Transverse colon (tissue), 4 donors: ENCODE measurements at regions of chr17 and their contacts with region 1.

Region 1: DNA sequence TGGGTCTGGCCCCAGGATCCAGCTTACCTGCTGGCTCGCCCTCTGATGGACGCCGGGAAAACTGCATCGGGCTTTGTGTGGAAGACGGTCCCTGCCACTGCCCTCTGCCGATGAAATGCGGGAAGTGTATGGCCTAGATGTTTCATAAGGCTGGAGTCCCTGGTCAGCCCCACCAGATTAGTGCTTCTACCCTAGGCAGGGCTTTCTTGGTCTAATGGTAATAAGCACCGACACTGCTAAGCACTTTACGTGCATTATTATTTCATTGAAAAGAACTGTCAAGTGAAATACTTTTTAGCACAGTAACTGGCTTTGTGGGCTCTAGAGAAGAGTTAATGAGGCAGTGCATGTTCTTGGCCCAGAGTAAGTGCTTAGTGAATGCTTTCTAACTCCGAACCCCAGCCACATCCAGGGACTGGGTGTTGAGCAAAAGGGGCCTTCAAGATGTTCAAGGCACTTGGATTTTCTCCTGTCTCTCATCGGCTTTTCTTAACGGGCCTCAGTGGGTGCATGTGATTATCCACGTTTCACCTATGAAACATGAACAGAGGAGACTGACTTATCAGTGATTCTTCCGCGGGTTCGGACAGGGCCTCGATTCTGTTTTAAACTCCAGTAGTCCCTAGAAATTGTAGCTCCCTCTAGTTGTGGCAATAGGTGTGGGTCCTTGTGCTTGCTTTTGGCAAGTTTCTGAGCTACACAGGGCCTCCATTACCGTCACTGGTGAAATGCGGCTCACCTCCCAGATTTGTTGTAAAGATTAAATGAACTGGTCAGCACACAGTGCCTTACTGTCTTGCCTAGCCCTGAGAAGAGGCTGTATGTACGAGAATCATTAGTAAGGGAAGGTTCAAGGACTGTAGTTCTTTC is 6.6 kb downstream of the TRAF4 start:
- DNase-seq: peak; percentile 97
- H3K4me3 ChIP-seq: no peak overlapping the region
- H3K27ac ChIP-seq: peak overlapping the region; percentile 63 to 99 (median 98)
- H3K4me1 ChIP-seq: peaks cover 17 to 51% (median 47%) of the 10 kb centered on the region in 4 donors
- H3K27me3 ChIP-seq: no peaks in the 10 kb centered on the region
- CTCF ChIP-seq: peak; percentile 99 to 100 (median 100)
- EP300 ChIP-seq: no peak
- POLR2A ChIP-seq: peak; percentile 8

Region 2: GRCh38 chr17:28726226-28727130 is 23.9 kb before region 1 on chr17 and contains the start of gene TLCD1:
- in situ Hi-C with region 1: no loop called
- intact Hi-C with region 1: loop called (anchors 2 kb)
- DNase-seq: peak; percentile 96
- H3K4me3 ChIP-seq: peak within 1 kb of the TSS; percentile 60 to 77 (median 64)
- H3K27ac ChIP-seq: peak within 1 kb of the TSS; percentile 97 to 98 (median 97)
- H3K4me1 ChIP-seq: peaks cover 25 to 69% (median 54%) of the 10 kb centered on the region in 4 donors
- H3K27me3 ChIP-seq: no peaks in the 10 kb centered on the region
- CTCF ChIP-seq: peak; percentile 99 to 100 (median 100)
- EP300 ChIP-seq: no peak
- POLR2A ChIP-seq: no peak
- total RNA-seq, gene TLCD1: 5.6 to 11.5 TPM in 2 of 4 donors, not detected in the others

Region 3: DNA sequence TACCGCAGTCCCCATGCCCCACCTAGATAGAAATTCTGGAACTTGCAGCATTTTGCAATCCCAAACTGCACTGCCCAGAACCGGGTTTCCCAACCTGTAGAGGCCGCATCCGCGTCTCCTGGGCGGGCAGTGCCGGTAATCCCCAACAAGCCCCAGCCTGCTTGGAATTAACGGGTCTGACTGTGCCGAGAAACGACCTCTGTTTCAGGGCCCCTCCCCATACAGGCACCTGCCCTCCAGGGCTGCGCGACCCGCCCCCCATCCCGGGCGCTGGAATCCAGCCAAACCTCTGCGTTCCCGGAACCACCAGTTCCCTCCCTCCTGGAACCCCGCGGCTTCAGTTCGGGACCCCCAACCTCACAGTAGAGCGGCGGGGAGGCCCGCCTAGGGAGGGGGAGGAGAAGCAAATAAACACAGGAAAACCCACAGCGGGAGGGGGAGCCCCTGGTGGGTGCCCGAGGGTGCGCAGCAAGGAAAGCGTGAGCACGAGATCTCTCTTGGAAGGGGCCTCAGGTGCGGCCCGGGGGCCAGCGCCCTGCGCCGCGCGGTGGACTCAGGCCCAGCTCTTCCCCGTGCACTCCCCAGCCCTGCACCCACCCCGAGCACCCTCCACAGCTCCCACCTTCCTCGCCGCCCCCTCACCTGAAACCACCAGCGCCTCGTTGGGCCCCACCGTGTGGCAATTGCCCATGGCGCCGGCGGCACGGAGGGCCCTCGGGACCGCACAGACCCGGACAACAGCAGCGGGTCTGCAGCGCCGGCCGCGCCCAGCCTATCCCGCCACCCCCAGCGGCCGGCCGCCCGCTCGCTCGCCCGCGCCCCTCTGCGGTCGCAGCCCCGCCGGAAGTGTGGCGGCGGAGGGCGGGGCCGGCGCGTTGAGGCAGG is 146.7 kb after region 1 on chr17 and contains the start of gene FLOT2:
- in situ Hi-C with region 1: loop called in 3 of 4 experiments (anchors 25 kb)
- intact Hi-C with region 1: no loop called
- DNase-seq: peak; percentile 68
- H3K4me3 ChIP-seq: peak within 1 kb of the TSS; percentile 66 to 85 (median 72)
- H3K27ac ChIP-seq: peak within 1 kb of the TSS; percentile 89 to 97 (median 92)
- H3K4me1 ChIP-seq: peaks cover 14 to 57% (median 43%) of the 10 kb centered on the region in 4 donors
- H3K27me3 ChIP-seq: no peaks in the 10 kb centered on the region
- CTCF ChIP-seq: peak; percentile 14 to 53 (median 34)
- EP300 ChIP-seq: peak; percentile 73
- POLR2A ChIP-seq: peak; percentile 30
- total RNA-seq, gene FLOT2: 35.8 to 95.8 (median 46.5) TPM

Region 4: GRCh38 chr17:28902819-28903545 is 152.6 kb after region 1 on chr17 and contains the start of gene DHRS13:
- in situ Hi-C with region 1: loop called in 3 of 4 experiments (anchors 25 kb)
- intact Hi-C with region 1: no loop called
- DNase-seq: peak; percentile 95
- H3K4me3 ChIP-seq: peak within 1 kb of the TSS; percentile 46 to 73 (median 71)
- H3K27ac ChIP-seq: peak within 1 kb of the TSS; percentile 89 to 95 (median 92)
- H3K4me1 ChIP-seq: peaks cover 11 to 34% (median 27%) of the 10 kb centered on the region in 4 donors
- H3K27me3 ChIP-seq: no peaks in the 10 kb centered on the region
- CTCF ChIP-seq: peak; percentile 71 to 89 (median 78)
- EP300 ChIP-seq: no peak
- POLR2A ChIP-seq: no peak
- total RNA-seq, gene DHRS13: 2.2 to 6.5 (median 6.0) TPM

Region 5: GRCh38 chr17:28916302-28916934 is 166.0 kb after region 1 on chr17:
- in situ Hi-C with region 1: loop called in 3 of 4 experiments (anchors 10 to 25 kb)
- intact Hi-C with region 1: no loop called
- DNase-seq: no peak
- H3K4me3 ChIP-seq: no peak overlapping the region
- H3K27ac ChIP-seq: no peak overlapping the region
- H3K4me1 ChIP-seq: peaks cover 5 to 12% (median 9%) of the 10 kb centered on the region in 4 donors
- H3K27me3 ChIP-seq: no peaks in the 10 kb centered on the region
- CTCF ChIP-seq: peak; percentile 61 to 76 (median 70)
- EP300 ChIP-seq: no peak
- POLR2A ChIP-seq: no peak